Lower lobe of right lung (tissue), 2 donors: ENCODE measurements at regions of chr5 and their contacts with region 1.

Region 1: GRCh38 chr5:67246108-67246507 is 49.5 kb upstream of the CD180 start:
- DNase-seq: no peak
- ATAC-seq: peak; percentile 49 to 78
- H3K4me3 ChIP-seq: no peak overlapping the region
- H3K27ac ChIP-seq: peak overlapping the region; percentile 10
- H3K4me1 ChIP-seq: peaks cover 37% of the 10 kb centered on the region
- H3K27me3 ChIP-seq: no peaks in the 10 kb centered on the region
- CTCF ChIP-seq: peak; percentile 76

Region 2: GRCh38 chr5:68252673-68253623 is 1006.8 kb after region 1 on chr5:
- intact Hi-C with region 1: loop called (anchors 10 kb)
- DNase-seq: no peak
- ATAC-seq: peak; percentile 66 to 80
- H3K4me3 ChIP-seq: peak overlapping the region; percentile 27
- H3K27ac ChIP-seq: peak overlapping the region; percentile 41
- H3K4me1 ChIP-seq: peaks cover 97% of the 10 kb centered on the region
- H3K27me3 ChIP-seq: no peaks in the 10 kb centered on the region
- CTCF ChIP-seq: peak; percentile 74